K562 (cell line): ENCODE measurements at regions of chr19 and their contacts with region 1.

Region 1: DNA sequence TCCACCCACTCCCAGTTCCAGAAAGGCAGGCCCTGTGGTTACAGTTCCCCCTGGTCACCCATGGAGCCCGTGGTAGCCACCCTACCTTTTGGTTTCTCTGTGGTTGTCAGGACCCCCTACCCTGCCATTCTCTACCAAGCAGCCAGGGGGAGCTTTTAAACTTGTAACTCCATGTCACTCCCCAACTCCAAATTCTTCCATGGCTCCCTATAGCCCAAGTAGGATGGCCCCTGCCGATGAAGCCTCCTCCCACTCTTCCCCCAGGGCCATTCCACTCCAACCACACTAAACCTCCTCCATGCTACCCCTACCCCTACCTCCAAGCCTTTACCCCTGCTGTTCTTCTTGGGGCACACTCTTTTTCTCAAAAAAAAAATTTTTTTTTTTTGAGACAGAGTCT is 2.2 kb downstream of the S1PR2 start:
- DNase-seq: peak; percentile 65 to 71 (median 70)
- ATAC-seq: peak; percentile 43
- H3K4me3 ChIP-seq: no peak overlapping the region
- H3K27ac ChIP-seq: no peak overlapping the region
- H3K4me1 ChIP-seq: peaks cover 20 to 36% of the 10 kb centered on the region in 2 experiments; a peak in 4 of 5 replicates
- H3K27me3 ChIP-seq: no peaks in the 10 kb centered on the region
- CTCF ChIP-seq: peak; percentile 61 to 73 (median 70)
- EP300 ChIP-seq: no peak
- POLR2A ChIP-seq: no peak
- RAD21 ChIP-seq: peak; percentile 43 to 68

Region 2: GRCh38 chr19:10251792-10252694 is 23.1 kb after region 1 on chr19 and contains the start of gene MRPL4:
- CTCF ChIA-PET with region 1: interaction called, 8 read pairs
- POLR2A ChIA-PET with region 1: interaction called, 4 read pairs
- in situ Hi-C with region 1: no loop called
- intact Hi-C with region 1: loop called (anchors 1 kb)
- DNase-seq: peak; percentile 96 to 99 (median 97)
- ATAC-seq: peak; percentile 98
- H3K4me3 ChIP-seq: peak within 1 kb of the TSS; percentile 76
- H3K27ac ChIP-seq: peak within 1 kb of the TSS; percentile 90
- H3K4me1 ChIP-seq: peaks cover 4 to 39% of the 10 kb centered on the region in 2 experiments; a peak in 4 of 5 replicates
- H3K27me3 ChIP-seq: no peaks in the 10 kb centered on the region
- CTCF ChIP-seq: 0 out of 6 replicates have a peak, but pooled peaks of 1 of the 3 experiments have one; percentile 2
- EP300 ChIP-seq: 0 out of 2 replicates have a peak, but pooled peaks have one; percentile 39
- POLR2A ChIP-seq: peak; percentile 90
- RAD21 ChIP-seq: no peak
- polyA plus RNA-seq, gene MRPL4: 1.4 to 5.0 TPM

Region 3: DNA sequence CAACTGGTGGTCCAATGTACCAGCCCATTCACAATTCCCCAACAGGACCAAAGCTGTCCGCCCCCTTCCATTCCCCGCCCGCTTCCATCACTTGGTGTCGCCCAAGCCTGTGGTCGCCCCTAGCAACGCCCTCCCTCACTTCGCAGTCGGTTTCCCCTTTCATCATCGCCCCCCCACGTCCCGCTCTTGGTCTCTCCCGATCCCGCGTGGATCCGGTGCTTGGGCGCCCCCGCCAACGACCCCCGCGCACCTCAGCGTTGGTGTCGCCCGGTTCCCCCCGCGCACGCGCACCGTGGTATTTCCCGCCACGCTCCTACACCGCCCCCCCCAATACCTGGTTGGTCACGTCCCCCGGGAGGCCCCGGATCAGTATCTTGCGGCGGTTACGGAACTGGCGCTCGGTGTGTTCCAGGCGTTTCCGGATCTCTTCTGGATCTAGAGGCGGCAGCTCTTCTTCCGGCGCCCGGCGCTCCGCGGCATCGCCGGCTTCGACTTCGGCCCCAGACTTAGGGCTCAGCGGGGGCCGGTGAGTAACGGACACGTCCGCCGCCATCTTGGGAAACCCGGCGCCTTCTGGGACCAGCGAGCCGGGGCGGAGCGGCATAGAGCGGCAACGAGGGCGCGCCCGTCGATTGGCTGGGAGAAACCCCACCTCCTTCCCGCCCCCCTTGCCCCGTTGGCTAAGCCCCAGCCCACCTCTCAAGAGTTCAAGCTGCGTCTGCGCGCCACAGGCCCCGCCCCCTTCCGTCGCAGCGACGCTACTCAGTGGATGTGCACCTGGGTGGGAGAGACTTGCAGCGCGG is 104.2 kb after region 1 on chr19 and contains the start of gene RAVER1:
- CTCF ChIA-PET with region 1: no interaction called
- POLR2A ChIA-PET with region 1: no interaction called
- in situ Hi-C with region 1: no loop called
- intact Hi-C with region 1: no loop called
- DNase-seq: peak; percentile 96 to 99 (median 98)
- ATAC-seq: peak; percentile 91
- H3K4me3 ChIP-seq: peak within 1 kb of the TSS; percentile 93
- H3K27ac ChIP-seq: peak within 1 kb of the TSS; percentile 98
- H3K4me1 ChIP-seq: peaks cover 15 to 54% of the 10 kb centered on the region in 2 experiments; a peak in 4 of 5 replicates
- H3K27me3 ChIP-seq: no peaks in the 10 kb centered on the region
- CTCF ChIP-seq: no peak
- EP300 ChIP-seq: no peak; the same call in 1 of the 2 replicates
- POLR2A ChIP-seq: peak; percentile 98
- RAD21 ChIP-seq: 0 out of 4 replicates have a peak, but pooled peaks of 1 of the 2 experiments have one; percentile 3
- polyA plus RNA-seq, gene RAVER1: 0.06 to 0.08 TPM